ENCODE measurements at regions of chr7 and their contacts with region 1.

Region 1: GRCh38 chr7:83655951-83656556 is 7.1 kb upstream of the SEMA3E start:
- DNase-seq: no peak

Region 2: DNA sequence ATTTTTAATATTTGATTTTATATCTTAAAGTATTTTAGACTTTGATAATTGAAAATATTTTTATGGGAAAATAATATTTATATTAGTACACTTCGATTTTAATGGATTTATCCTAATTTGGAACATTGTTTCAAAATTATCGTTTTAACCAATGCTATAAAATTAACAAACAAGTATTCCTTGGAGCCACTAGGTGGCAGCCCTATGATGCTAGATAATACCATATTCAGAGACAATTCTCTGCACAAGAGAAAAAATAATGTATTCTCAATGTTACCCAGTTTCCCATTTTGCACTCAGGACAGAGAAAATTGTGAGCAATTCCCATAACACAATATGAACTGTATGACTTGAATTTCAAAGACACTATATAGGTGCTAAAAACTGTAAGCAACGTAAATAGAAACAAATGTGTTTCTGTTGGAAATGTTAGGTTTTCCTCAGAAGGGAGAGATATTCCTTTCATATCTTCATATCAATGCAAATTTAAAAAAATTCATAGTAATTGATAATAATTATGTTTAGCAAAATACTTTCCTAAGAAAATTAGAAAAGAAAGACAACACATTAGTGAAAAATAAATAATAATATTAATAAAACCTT is 245.0 kb before region 1 on chr7:
- intact Hi-C with region 1: loop called in 1 of 2 experiments (anchors 10 kb)
- DNase-seq: no peak

Region 3: GRCh38 chr7:83613232-83613631 is 42.8 kb before region 1 on chr7:
- intact Hi-C with region 1: no loop called
- DNase-seq: no peak

Region 4: DNA sequence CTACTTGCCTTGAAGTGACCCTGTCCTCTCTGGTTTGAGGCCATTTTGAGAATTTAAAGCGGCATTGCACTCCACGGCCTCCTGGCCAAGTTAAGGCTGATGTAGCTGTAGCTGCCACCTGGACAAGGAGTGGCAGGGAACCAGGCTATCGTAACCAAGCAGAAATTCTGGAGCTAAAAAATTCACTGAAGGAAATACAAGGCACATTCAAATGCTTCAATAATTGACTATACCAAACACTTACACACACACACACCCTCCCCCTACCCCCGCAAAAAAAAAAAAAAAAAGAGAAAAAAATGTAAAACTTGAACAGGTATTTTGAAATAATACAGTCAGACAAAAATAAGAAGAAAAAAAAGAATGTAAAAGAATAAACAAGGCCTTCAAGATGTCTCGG is 947.5 kb after region 1 on chr7:
- intact Hi-C with region 1: no loop called
- DNase-seq: no peak